Colonic mucosa (tissue), 4 donors: ENCODE measurements at regions of chr16 and their contacts with region 1.

Region 1: GRCh38 chr16:8712589-8713361 is 38.4 kb downstream of the ABAT start:
- DNase-seq: no peak
- H3K4me3 ChIP-seq: no peak overlapping the region
- H3K27ac ChIP-seq: no peak overlapping the region
- H3K4me1 ChIP-seq: no peaks in the 10 kb centered on the region
- H3K27me3 ChIP-seq: no peaks in the 10 kb centered on the region
- CTCF ChIP-seq: no peak

Region 2: GRCh38 chr16:8768692-8769091 is 55.9 kb after region 1 on chr16:
- intact Hi-C with region 1: loop called (anchors 10 kb)
- DNase-seq: no peak
- H3K4me3 ChIP-seq: no peak overlapping the region
- H3K27ac ChIP-seq: no peak overlapping the region
- H3K4me1 ChIP-seq: no peaks in the 10 kb centered on the region
- H3K27me3 ChIP-seq: no peaks in the 10 kb centered on the region
- CTCF ChIP-seq: no peak